Caco-2 (cell line): ENCODE measurements at regions of chr11 and their contacts with region 1.

Region 1: GRCh38 chr11:65314501-65315203 is at the start of gene CDC42EP2:
- DNase-seq: peak; percentile 87 to 94
- H3K4me3 ChIP-seq: peak within 1 kb of the TSS; percentile 99
- H3K4me3 Mint-ChIP-seq: peak within 1 kb of the TSS; percentile 81
- H3K27ac Mint-ChIP-seq: peak within 1 kb of the TSS; percentile 80
- H3K4me1 ChIP-seq: peaks cover 33% of the 10 kb centered on the region
- H3K4me1 Mint-ChIP-seq: peaks cover 28% of the 10 kb centered on the region
- H3K27me3 ChIP-seq: no peaks in the 10 kb centered on the region
- H3K27me3 Mint-ChIP-seq: no peaks in the 10 kb centered on the region
- CTCF ChIP-seq: peak in 1 of 2 experiments; percentile 10
- total RNA-seq, gene CDC42EP2: 38.0 and 40.7 TPM in 2 replicates

Region 2: GRCh38 chr11:65261591-65262380 is 52.9 kb before region 1 on chr11 and contains the start of gene POLA2:
- CTCF ChIA-PET with region 1: interaction called, 17 read pairs
- POLR2A ChIA-PET with region 1: interaction called, 9 read pairs
- intact Hi-C with region 1: no loop called
- DNase-seq: peak; percentile 96
- H3K4me3 ChIP-seq: peak within 1 kb of the TSS; percentile 71
- H3K4me3 Mint-ChIP-seq: peak within 1 kb of the TSS; percentile 81
- H3K27ac Mint-ChIP-seq: peak within 1 kb of the TSS; percentile 70
- H3K4me1 ChIP-seq: no peaks in the 10 kb centered on the region
- H3K4me1 Mint-ChIP-seq: peaks cover 22% of the 10 kb centered on the region
- H3K27me3 ChIP-seq: no peaks in the 10 kb centered on the region
- H3K27me3 Mint-ChIP-seq: no peaks in the 10 kb centered on the region
- CTCF ChIP-seq: no peak
- total RNA-seq, gene POLA2: 23.2 and 25.3 TPM in 2 replicates

Region 3: DNA sequence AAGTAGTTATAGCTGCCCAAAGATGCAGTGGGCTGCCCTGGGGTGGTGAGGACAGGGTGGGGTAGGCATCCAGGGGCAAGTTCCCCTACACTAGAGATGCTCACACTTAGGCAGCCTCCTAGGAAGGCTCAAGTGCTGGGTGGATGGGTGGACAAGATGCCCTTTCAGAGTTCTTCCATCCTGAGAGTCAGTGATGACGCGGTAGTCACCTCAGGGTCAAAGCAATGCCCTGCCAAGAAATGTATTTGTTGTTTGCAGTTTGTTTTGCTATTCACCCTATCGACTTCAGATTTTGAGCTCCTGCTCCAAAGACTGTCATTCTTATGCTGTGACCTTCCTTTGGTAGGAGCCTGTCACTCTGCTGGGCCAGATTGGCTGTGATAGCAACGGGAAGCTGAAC is 34.0 kb before region 1 on chr11:
- CTCF ChIA-PET with region 1: interaction called, 337 read pairs
- POLR2A ChIA-PET with region 1: interaction called, 81 read pairs
- intact Hi-C with region 1: loop called (anchors 1 kb)
- DNase-seq: no peak
- H3K4me3 ChIP-seq: no peak overlapping the region
- H3K4me3 Mint-ChIP-seq: no peak overlapping the region
- H3K27ac Mint-ChIP-seq: peak overlapping the region; percentile 16
- H3K4me1 ChIP-seq: peaks cover 55% of the 10 kb centered on the region
- H3K4me1 Mint-ChIP-seq: peaks cover 39% of the 10 kb centered on the region
- H3K27me3 ChIP-seq: no peaks in the 10 kb centered on the region
- H3K27me3 Mint-ChIP-seq: no peaks in the 10 kb centered on the region
- CTCF ChIP-seq: no peak

Region 4: GRCh38 chr11:65290448-65291165 is 24.0 kb before region 1 on chr11:
- CTCF ChIA-PET with region 1: interaction called, 26 read pairs
- POLR2A ChIA-PET with region 1: interaction called, 18 read pairs
- intact Hi-C with region 1: loop called (anchors 1 kb)
- DNase-seq: no peak
- H3K4me3 ChIP-seq: no peak overlapping the region
- H3K4me3 Mint-ChIP-seq: peak overlapping the region; percentile 83
- H3K27ac Mint-ChIP-seq: peak overlapping the region; percentile 97
- H3K4me1 ChIP-seq: peaks cover 47% of the 10 kb centered on the region
- H3K4me1 Mint-ChIP-seq: peaks cover 46% of the 10 kb centered on the region
- H3K27me3 ChIP-seq: no peaks in the 10 kb centered on the region
- H3K27me3 Mint-ChIP-seq: no peaks in the 10 kb centered on the region
- CTCF ChIP-seq: no peak

Region 5: GRCh38 chr11:65301491-65302329 is 12.9 kb before region 1 on chr11:
- CTCF ChIA-PET with region 1: interaction called, 18 read pairs
- POLR2A ChIA-PET with region 1: interaction called, 8 read pairs
- intact Hi-C with region 1: loop called (anchors 1 kb)
- DNase-seq: peak; percentile 73 to 77
- H3K4me3 ChIP-seq: no peak overlapping the region
- H3K4me3 Mint-ChIP-seq: peak overlapping the region; percentile 44
- H3K27ac Mint-ChIP-seq: peak overlapping the region; percentile 89
- H3K4me1 ChIP-seq: peaks cover 55% of the 10 kb centered on the region
- H3K4me1 Mint-ChIP-seq: peaks cover 29% of the 10 kb centered on the region
- H3K27me3 ChIP-seq: no peaks in the 10 kb centered on the region
- H3K27me3 Mint-ChIP-seq: no peaks in the 10 kb centered on the region
- CTCF ChIP-seq: no peak

Region 6: GRCh38 chr11:65329944-65330403 is 15.3 kb after region 1 on chr11:
- CTCF ChIA-PET with region 1: interaction called, 32 read pairs
- POLR2A ChIA-PET with region 1: no interaction called
- intact Hi-C with region 1: loop called (anchors 1 kb)
- DNase-seq: peak; percentile 87 to 89
- H3K4me3 ChIP-seq: no peak overlapping the region
- H3K4me3 Mint-ChIP-seq: no peak overlapping the region
- H3K27ac Mint-ChIP-seq: peak overlapping the region; percentile 3
- H3K4me1 ChIP-seq: peaks cover 9% of the 10 kb centered on the region; the same call in 1 of the 2 replicates
- H3K4me1 Mint-ChIP-seq: peaks cover 8% of the 10 kb centered on the region
- H3K27me3 ChIP-seq: no peaks in the 10 kb centered on the region
- H3K27me3 Mint-ChIP-seq: no peaks in the 10 kb centered on the region
- CTCF ChIP-seq: peak; percentile 78 to 86